Vagina (tissue), 2 donors: ENCODE measurements at regions of chr5 and their contacts with region 1.

Region 1: GRCh38 chr5:141992349-141992963 is 20.4 kb downstream of the GNPDA1 start:
- DNase-seq: no peak
- H3K4me3 ChIP-seq: no peak overlapping the region
- H3K27ac ChIP-seq: no peak overlapping the region
- H3K4me1 ChIP-seq: no peaks in the 10 kb centered on the region
- H3K27me3 ChIP-seq: no peaks in the 10 kb centered on the region
- CTCF ChIP-seq: peak; percentile 62 to 85 (median 65)
- POLR2A ChIP-seq: no peak

Region 2: DNA sequence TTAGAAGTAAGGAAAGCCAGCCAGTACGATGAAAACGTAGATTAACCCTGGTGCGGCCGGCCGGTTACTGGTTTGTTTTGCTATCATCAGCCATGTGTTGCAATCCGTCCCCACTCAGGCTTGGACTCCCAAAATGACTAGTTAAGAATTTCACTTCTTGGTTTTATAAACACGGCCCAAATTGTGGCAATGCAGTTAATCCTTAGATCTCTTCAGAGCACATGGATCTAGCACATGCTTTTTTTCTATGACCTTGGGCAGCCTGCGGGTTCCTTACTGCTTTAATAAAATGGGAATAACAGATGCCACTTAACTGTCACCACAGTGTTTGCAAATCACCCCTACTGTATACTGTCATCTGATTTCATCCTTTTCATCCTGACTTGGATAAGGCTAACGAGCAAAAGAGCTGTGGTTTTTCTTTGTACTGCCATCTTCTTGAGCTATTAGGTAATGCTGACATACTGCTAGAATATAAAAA is 117.6 kb after region 1 on chr5:
- intact Hi-C with region 1: loop called (anchors 10 kb)
- DNase-seq: no peak
- H3K4me3 ChIP-seq: peak overlapping the region; percentile 69 to 74
- H3K27ac ChIP-seq: peak overlapping the region; percentile 98
- H3K4me1 ChIP-seq: peaks cover 48% of the 10 kb centered on the region
- H3K27me3 ChIP-seq: no peaks in the 10 kb centered on the region
- CTCF ChIP-seq: no peak
- POLR2A ChIP-seq: no peak

Region 3: DNA sequence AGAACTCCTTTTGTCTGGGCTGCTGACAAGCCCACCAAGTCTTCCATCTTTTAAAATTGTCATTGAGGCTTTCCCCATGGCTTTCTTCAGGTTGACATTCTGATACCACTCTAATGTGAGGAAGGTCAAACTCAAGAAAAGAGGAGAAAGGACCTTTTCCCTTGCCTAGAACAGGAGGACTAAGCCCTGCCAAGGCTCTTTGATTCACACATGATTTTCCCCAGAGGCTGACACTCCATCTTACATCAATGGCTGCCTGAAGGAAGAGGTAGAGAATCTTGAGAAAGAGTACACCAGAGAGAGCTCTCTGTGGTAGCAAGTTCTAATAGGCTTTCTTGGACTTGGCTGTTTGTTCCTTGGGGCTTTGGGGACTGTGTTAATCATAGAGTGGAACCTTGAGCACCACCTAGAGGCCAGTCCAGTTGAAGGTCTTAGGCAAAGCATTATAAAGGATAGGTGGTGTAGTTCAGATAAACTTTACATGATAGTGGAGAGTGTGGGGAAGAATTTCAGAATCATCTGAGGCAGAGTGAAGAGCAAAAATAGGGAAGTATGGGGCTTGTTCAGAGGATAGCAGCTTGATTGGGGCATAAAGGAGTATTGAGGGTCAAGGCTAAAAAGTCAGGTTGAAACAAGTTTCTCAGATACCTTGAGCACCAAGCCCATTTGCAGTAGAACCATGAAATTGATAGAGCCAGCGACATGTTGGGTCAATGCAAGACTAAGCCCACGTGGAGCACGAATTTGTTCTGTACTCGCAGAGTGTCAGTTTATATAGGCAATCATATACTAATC is 152.8 kb after region 1 on chr5:
- intact Hi-C with region 1: loop called (anchors 5 kb)
- DNase-seq: no peak
- H3K4me3 ChIP-seq: no peak overlapping the region
- H3K27ac ChIP-seq: no peak overlapping the region
- H3K4me1 ChIP-seq: no peaks in the 10 kb centered on the region
- H3K27me3 ChIP-seq: no peaks in the 10 kb centered on the region
- CTCF ChIP-seq: peak in 2 of 3 experiments; percentile 43 to 49
- POLR2A ChIP-seq: no peak